ENCODE measurements at regions of chr4 and their contacts with region 1.

Region 1: DNA sequence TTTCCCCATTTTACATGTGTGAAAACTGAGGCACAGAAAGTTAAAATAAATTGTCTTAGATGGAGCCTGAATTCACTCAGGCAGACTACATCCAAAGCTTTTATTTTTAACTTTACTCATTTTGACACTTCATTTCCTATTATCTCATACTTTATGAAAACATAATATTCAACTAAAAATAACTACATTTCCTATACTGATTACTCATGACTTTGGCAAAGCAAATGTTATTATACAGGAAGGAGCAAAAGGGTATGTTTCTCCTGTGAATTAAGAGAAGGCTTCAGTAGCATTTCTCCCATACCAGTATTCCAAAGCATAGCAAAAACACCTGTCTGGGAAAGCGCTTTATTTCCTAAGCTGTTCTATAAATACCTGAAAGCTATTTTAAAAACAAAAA is 178.6 kb downstream of the ADAMTS3 start:
- DNase-seq: no peak
- H3K4me3 ChIP-seq: no peak overlapping the region
- H3K27ac ChIP-seq: no peak overlapping the region
- H3K4me1 ChIP-seq: peaks cover 0 to 17% (median 4%) of the 10 kb centered on the region in 4 donors
- H3K27me3 ChIP-seq: no peaks in the 10 kb centered on the region
- CTCF ChIP-seq: no peak

Region 2: GRCh38 chr4:71343670-71344466 is 1046.5 kb before region 1 on chr4:
- intact Hi-C with region 1: loop called (anchors 10 kb)
- DNase-seq: no peak
- H3K4me3 ChIP-seq: no peak overlapping the region
- H3K27ac ChIP-seq: no peak overlapping the region
- H3K4me1 ChIP-seq: no peaks in the 10 kb centered on the region
- H3K27me3 ChIP-seq: no peaks in the 10 kb centered on the region
- CTCF ChIP-seq: no peak

Region 3: DNA sequence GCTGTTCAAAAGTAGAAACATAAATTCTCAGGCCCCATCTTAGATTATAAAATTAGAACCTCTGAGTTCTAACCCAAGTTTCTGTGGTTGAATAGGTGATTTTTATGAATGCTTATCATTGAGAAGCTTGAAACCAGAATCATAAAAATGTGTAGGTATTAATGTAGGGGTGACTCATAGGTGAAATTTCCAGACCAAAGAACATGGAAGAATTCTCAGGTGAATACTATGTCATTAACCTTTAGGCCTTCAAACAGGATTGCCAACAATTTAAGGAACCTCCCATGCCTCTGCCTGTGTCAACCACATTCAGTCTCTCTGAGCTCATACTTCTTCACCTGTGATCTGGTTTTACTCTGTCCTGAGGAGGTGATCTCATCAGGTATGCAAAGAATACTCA is 180.8 kb before region 1 on chr4:
- intact Hi-C with region 1: no loop called
- DNase-seq: no peak
- H3K4me3 ChIP-seq: no peak overlapping the region
- H3K27ac ChIP-seq: no peak overlapping the region
- H3K4me1 ChIP-seq: no peaks in the 10 kb centered on the region
- H3K27me3 ChIP-seq: no peaks in the 10 kb centered on the region
- CTCF ChIP-seq: no peak